ENCODE measurements at regions of chr9 and their contacts with region 1.

Region 1: GRCh38 chr9:129509522-129510270 is 111.2 kb downstream of the C9orf50 start:
- DNase-seq: peak; percentile 98
- ATAC-seq: peak; percentile 89
- H3K4me3 ChIP-seq: no peak overlapping the region
- H3K27ac ChIP-seq: peak overlapping the region; percentile 91; the same call in 1 of the 2 replicates
- H3K4me1 ChIP-seq: peaks cover 9% of the 10 kb centered on the region
- H3K27me3 ChIP-seq: no peaks in the 10 kb centered on the region
- CTCF ChIP-seq: no peak
- POLR2A ChIP-seq: no peak
- RAD21 ChIP-seq: no peak

Region 2: GRCh38 chr9:129495534-129496325 is 14.0 kb before region 1 on chr9:
- CTCF ChIA-PET with region 1: no interaction called
- POLR2A ChIA-PET with region 1: no interaction called
- dilution Hi-C with region 1: no loop called
- in situ Hi-C with region 1: no loop called
- intact Hi-C with region 1: no loop called
- DNase-seq: peak; percentile 84
- ATAC-seq: peak; percentile 75
- H3K4me3 ChIP-seq: peak overlapping the region; percentile 22
- H3K27ac ChIP-seq: peak overlapping the region; percentile 99
- H3K4me1 ChIP-seq: peaks cover 49% of the 10 kb centered on the region
- H3K27me3 ChIP-seq: no peaks in the 10 kb centered on the region
- CTCF ChIP-seq: no peak
- POLR2A ChIP-seq: no peak
- RAD21 ChIP-seq: no peak; the same call in 1 of the 2 replicates

Region 3: DNA sequence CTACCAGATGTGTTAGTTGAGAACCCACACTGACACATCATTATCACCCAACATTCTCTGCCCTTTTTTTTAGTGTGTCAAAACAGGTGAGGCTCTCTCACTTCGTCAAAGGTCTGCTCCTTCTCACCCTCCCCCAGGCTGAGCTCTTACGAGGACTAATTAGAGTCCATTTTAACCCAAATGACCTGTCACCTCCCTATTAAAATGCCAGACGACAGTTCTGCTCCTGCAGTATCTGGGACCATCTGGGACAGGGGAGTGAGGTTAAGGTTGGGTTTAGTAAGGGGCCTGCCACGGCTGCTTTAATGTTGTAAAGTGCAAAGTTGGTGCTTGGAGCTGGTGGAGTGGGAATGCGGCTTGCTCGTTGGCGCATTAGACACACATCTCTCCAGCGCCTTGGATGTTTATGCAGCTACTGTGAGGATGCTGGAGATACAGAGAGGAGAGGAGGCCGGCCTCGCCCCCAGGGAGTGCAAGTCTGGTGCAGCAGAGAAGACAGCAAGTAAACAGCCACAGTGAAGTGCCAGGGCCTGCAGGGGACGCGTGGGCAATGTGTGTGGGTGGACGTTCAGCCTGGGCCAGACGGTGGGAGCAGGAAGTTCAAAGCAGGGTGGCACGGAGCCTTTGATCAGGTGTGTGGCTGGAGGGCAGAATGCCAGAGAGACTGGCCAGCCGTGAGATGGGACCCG is 15.0 kb after region 1 on chr9:
- CTCF ChIA-PET with region 1: no interaction called
- POLR2A ChIA-PET with region 1: no interaction called
- dilution Hi-C with region 1: no loop called
- in situ Hi-C with region 1: no loop called
- intact Hi-C with region 1: loop called (anchors 1 kb)
- DNase-seq: no peak
- ATAC-seq: no peak; the same call in 1 of the 2 replicates
- H3K4me3 ChIP-seq: no peak overlapping the region
- H3K27ac ChIP-seq: no peak overlapping the region
- H3K4me1 ChIP-seq: no peaks in the 10 kb centered on the region
- H3K27me3 ChIP-seq: peaks cover 4% of the 10 kb centered on the region
- CTCF ChIP-seq: no peak
- POLR2A ChIP-seq: no peak
- RAD21 ChIP-seq: no peak